ENCODE measurements at regions of chr16 and their contacts with region 1.

Region 1: DNA sequence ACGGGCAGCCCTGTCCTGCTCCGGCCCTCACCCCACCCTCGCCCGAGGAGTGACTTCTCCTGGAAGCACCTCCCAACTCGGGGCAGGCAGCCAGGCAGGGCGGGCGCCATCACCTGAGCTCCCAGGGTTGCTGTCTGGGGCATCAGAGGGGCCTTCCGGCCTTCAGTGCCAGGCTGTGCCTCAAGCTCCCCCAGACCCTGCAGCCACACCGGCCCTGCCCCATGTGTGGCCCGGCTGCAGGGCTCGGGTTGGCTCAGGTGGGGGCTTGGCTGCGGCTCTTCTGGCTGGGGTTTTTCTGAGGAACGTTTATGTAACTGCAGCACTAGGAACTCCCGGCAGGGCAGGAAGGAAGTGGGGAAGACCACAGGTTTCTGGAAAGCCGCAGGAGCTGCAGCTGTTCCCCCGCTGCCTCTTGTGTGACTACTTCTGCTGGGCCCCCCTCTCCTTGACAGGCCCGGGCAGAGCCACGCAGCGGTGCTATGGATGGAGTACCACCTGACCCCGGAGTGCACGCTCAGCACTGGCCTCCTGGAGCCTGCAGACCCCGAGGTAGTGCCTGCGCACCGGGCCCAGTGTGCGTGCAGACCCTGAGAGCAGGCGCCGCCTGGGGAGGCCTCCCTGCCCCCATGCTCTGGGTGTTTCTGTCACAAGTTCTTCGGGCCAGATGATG is 45.6 kb downstream of the PRMT7 start:
- DNase-seq: peak; percentile 85
- ATAC-seq: peak; percentile 82
- H3K4me3 Mint-ChIP-seq: peak overlapping the region; percentile 68
- H3K27ac Mint-ChIP-seq: peak overlapping the region; percentile 81
- H3K4me1 Mint-ChIP-seq: peaks cover 34% of the 10 kb centered on the region
- H3K27me3 Mint-ChIP-seq: peaks cover 4% of the 10 kb centered on the region

Region 2: GRCh38 chr16:68345351-68345810 is 11.0 kb before region 1 on chr16:
- POLR2A ChIA-PET with region 1: interaction called, 29 read pairs
- DNase-seq: peak; percentile 69
- ATAC-seq: peak; percentile 98
- H3K4me3 Mint-ChIP-seq: peak overlapping the region; percentile 72
- H3K27ac Mint-ChIP-seq: peak overlapping the region; percentile 80
- H3K4me1 Mint-ChIP-seq: peaks cover 33% of the 10 kb centered on the region
- H3K27me3 Mint-ChIP-seq: no peaks in the 10 kb centered on the region

Region 3: GRCh38 chr16:68367030-68367429 is 10.6 kb after region 1 on chr16:
- POLR2A ChIA-PET with region 1: interaction called, 27 read pairs
- DNase-seq: peak; percentile 54
- ATAC-seq: peak; percentile 32
- H3K4me3 Mint-ChIP-seq: peak overlapping the region; percentile 35
- H3K27ac Mint-ChIP-seq: no peak overlapping the region
- H3K4me1 Mint-ChIP-seq: peaks cover 32% of the 10 kb centered on the region
- H3K27me3 Mint-ChIP-seq: peaks cover 19% of the 10 kb centered on the region

Measured in activated naive CD8-positive, alpha-beta T cell treated with anti-CD3 and anti-CD28 coated beads, Interleukin-2, amount 10 ng/mL, durations not matched to agents 7 days and 5 days (primary cell).